ENCODE measurements at regions of chr3 and their contacts with region 1.

Region 1: GRCh38 chr3:5026331-5027218 is 47.3 kb downstream of the BHLHE40 start:
- ATAC-seq: peak; percentile 76 to 93 (median 92)
- H3K4me3 ChIP-seq: peak overlapping the region; percentile 18 to 27 (median 25)
- H3K27ac ChIP-seq: peak overlapping the region; percentile 88 to 91
- H3K4me1 ChIP-seq: peaks cover 7 to 9% of the 10 kb centered on the region in 2 donors

Region 2: GRCh38 chr3:4722103-4722502 is 304.5 kb before region 1 on chr3:
- in situ Hi-C with region 1: loop called in 1 of 9 experiments (anchors 25 kb)
- ATAC-seq: peak; percentile 32 to 90 (median 76)
- H3K4me3 ChIP-seq: no peak overlapping the region
- H3K27ac ChIP-seq: no peak overlapping the region
- H3K4me1 ChIP-seq: peaks cover 0 to 6% of the 10 kb centered on the region in 2 donors